CD8-positive, alpha-beta memory T cell (primary cell): ENCODE measurements at regions of chr1 and their contacts with region 1.

Region 1: GRCh38 chr1:23098463-23099170 is 70.0 kb downstream of the LUZP1 start:
- DNase-seq: peak; percentile 36 to 74 (median 56)
- H3K4me3 ChIP-seq: no peak overlapping the region
- H3K4me3 Mint-ChIP-seq: peak overlapping the region; percentile 5 to 69 (median 47)
- H3K27ac ChIP-seq: no peak overlapping the region
- H3K27ac Mint-ChIP-seq: peak overlapping the region; percentile 2 to 93 (median 73)
- H3K4me1 ChIP-seq: peaks cover 25% of the 10 kb centered on the region
- H3K4me1 Mint-ChIP-seq: peaks cover 43 to 58% (median 50%) of the 10 kb centered on the region in 3 donors
- H3K27me3 ChIP-seq: no peaks in the 10 kb centered on the region
- H3K27me3 Mint-ChIP-seq: no peaks in the 10 kb centered on the region

Region 2: GRCh38 chr1:23062271-23062670 is 36.3 kb before region 1 on chr1:
- CTCF ChIA-PET with region 1: no interaction called
- POLR2A ChIA-PET with region 1: no interaction called
- DNase-seq: no peak
- H3K4me3 ChIP-seq: no peak overlapping the region
- H3K4me3 Mint-ChIP-seq: no peak overlapping the region
- H3K27ac ChIP-seq: no peak overlapping the region
- H3K27ac Mint-ChIP-seq: peak overlapping the region in 1 of 8 donors; percentile 14
- H3K4me1 ChIP-seq: no peaks in the 10 kb centered on the region
- H3K4me1 Mint-ChIP-seq: peaks cover 0 to 5% (median 0%) of the 10 kb centered on the region in 3 donors
- H3K27me3 ChIP-seq: no peaks in the 10 kb centered on the region
- H3K27me3 Mint-ChIP-seq: no peaks in the 10 kb centered on the region

Region 3: GRCh38 chr1:23118957-23119792 is 20.6 kb after region 1 on chr1:
- CTCF ChIA-PET with region 1: interaction called, 22 read pairs
- POLR2A ChIA-PET with region 1: interaction called, 10 read pairs
- DNase-seq: peak in 4 of 5 donors; percentile 8 to 80 (median 56)
- H3K4me3 ChIP-seq: peak overlapping the region; percentile 52
- H3K4me3 Mint-ChIP-seq: peak overlapping the region; percentile 58 to 88 (median 75)
- H3K27ac ChIP-seq: peak overlapping the region; percentile 88
- H3K27ac Mint-ChIP-seq: peak overlapping the region; percentile 91 to 99 (median 94)
- H3K4me1 ChIP-seq: peaks cover 49% of the 10 kb centered on the region
- H3K4me1 Mint-ChIP-seq: peaks cover 55 to 77% (median 70%) of the 10 kb centered on the region in 3 donors
- H3K27me3 ChIP-seq: no peaks in the 10 kb centered on the region
- H3K27me3 Mint-ChIP-seq: peaks cover 0 to 3% of the 10 kb centered on the region in 2 donors

Region 4: GRCh38 chr1:23224714-23225648 is 126.4 kb after region 1 on chr1:
- CTCF ChIA-PET with region 1: no interaction called
- POLR2A ChIA-PET with region 1: no interaction called
- DNase-seq: no peak
- H3K4me3 ChIP-seq: no peak overlapping the region
- H3K4me3 Mint-ChIP-seq: no peak overlapping the region
- H3K27ac ChIP-seq: no peak overlapping the region
- H3K27ac Mint-ChIP-seq: no peak overlapping the region
- H3K4me1 ChIP-seq: no peaks in the 10 kb centered on the region
- H3K4me1 Mint-ChIP-seq: no peaks in the 10 kb centered on the region
- H3K27me3 ChIP-seq: peaks cover 7% of the 10 kb centered on the region
- H3K27me3 Mint-ChIP-seq: peaks cover 22 to 58% of the 10 kb centered on the region in 2 donors